Activated CD4-positive, alpha-beta T cell treated with anti-CD3 and anti-CD28 coated beads for 36 hours (primary cell): ENCODE measurements at regions of chr9 and their contacts with region 1.

Region 1: DNA sequence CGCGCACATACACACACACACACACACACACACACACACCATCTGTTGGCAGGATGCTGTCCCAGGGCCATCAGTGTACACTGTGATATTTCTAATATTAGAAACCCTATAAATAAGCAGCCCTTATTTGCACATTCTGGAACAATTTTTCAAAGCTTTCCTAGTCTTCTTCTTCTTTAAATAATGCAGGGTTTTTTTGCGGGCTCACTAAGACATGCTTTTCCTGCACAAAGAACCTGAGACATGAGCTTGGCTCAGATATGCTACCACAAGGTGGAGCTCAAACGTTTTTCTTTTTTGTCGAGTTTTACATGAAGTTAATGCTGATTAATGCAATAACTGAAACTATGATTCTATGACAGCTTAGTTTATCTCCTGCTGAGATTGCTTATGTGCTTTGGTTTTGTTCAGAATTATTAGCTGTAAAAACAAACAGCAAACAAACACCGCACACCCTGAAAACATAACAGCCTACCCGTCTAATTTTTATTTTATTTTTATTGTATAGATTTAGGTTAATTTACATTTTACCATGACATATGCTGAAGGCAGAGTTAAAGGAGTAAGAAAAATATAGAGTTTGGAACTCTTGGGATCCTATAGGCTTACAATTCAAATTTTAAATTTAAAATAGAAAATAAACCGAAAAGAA is 95.8 kb downstream of the ALDH1A1 start:
- DNase-seq: peak; percentile 9
- ATAC-seq: no peak
- H3K4me3 Mint-ChIP-seq: no peak overlapping the region
- H3K27ac Mint-ChIP-seq: no peak overlapping the region
- H3K4me1 Mint-ChIP-seq: no peaks in the 10 kb centered on the region
- H3K27me3 Mint-ChIP-seq: no peaks in the 10 kb centered on the region

Region 2: GRCh38 chr9:72794947-72795346 is 62.2 kb before region 1 on chr9:
- CTCF ChIA-PET with region 1: no interaction called
- POLR2A ChIA-PET with region 1: no interaction called
- intact Hi-C with region 1: loop called in 1 of 2 experiments (anchors 10 kb)
- DNase-seq: no peak
- ATAC-seq: no peak
- H3K4me3 Mint-ChIP-seq: no peak overlapping the region
- H3K27ac Mint-ChIP-seq: no peak overlapping the region
- H3K4me1 Mint-ChIP-seq: no peaks in the 10 kb centered on the region
- H3K27me3 Mint-ChIP-seq: peaks cover 8% of the 10 kb centered on the region

Region 3: DNA sequence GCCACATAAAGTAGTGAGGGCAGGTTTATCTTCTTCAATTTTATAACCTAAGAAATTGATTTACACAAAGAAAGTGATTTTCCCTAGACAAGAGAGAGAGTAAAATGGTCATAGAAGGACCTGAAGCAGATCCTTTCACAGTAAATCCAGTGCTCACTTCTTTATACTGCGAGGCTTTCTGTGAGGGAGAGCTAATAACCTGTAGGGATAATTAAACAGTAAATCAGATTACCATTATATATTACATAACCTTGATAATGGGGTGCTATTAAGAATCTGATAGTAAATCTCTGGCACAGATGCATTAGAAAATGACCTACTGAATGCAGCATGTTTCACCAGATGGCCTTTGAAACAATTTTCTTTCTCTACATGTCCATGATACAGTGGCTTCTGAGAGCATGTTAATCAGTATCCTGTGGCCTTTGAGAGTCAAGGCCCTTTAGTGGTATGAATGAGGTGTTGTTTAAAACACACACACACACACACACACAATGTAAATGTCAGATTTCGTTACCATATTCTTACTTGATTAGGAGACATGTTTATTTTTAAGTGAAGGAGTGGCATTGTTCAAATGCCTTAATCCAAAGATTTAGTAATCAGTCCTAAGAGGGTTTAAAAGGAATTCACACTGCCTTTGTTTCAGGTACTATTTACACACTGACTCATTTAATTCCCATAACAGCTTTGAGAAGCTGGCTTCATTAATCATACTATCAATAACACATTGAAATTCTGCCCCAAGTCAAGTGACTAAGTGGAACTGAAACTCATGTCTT is 29.0 kb before region 1 on chr9:
- CTCF ChIA-PET with region 1: no interaction called
- POLR2A ChIA-PET with region 1: no interaction called
- intact Hi-C with region 1: no loop called
- DNase-seq: no peak
- ATAC-seq: no peak
- H3K4me3 Mint-ChIP-seq: no peak overlapping the region
- H3K27ac Mint-ChIP-seq: no peak overlapping the region
- H3K4me1 Mint-ChIP-seq: no peaks in the 10 kb centered on the region
- H3K27me3 Mint-ChIP-seq: peaks cover 6% of the 10 kb centered on the region

Region 4: GRCh38 chr9:73023025-73023541 is 166.0 kb after region 1 on chr9:
- CTCF ChIA-PET with region 1: interaction called, 16 read pairs
- POLR2A ChIA-PET with region 1: no interaction called
- intact Hi-C with region 1: loop called (anchors 5 kb)
- DNase-seq: peak; percentile 72
- ATAC-seq: peak; percentile 74
- H3K4me3 Mint-ChIP-seq: no peak overlapping the region
- H3K27ac Mint-ChIP-seq: no peak overlapping the region
- H3K4me1 Mint-ChIP-seq: peaks cover 8% of the 10 kb centered on the region
- H3K27me3 Mint-ChIP-seq: peaks cover 11% of the 10 kb centered on the region

Region 5: DNA sequence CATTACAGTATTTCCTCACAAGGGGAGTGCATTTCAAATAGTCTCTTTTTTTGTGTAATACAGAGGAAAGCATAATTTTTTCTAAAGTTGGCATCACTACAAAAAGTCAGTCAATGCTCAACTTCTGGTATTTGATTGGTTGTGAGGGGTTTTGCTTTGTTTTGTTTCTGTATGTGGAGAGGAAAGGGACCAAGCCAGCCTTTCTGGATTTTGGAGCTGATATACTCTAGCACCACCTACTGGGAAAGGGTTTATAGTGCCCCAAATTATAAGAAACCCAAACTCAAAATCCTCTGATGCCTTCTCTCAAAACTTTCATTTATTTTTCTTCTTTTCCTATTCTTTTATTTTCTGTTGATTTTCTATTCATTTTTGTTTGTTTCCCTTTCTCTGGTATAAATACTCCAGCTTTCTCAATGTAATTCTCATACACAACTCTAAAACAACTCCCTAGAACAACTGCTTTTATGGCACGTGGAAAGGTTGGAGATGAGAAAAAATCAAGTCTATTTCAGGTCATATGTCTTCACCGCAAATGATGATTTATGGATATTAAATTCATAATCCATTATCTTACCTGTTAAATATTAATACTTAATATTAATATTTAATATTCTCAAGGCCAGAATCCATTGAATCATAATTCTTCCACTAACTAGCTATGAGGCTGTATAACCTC is 225.0 kb after region 1 on chr9:
- CTCF ChIA-PET with region 1: interaction called, 7 read pairs
- POLR2A ChIA-PET with region 1: no interaction called
- intact Hi-C with region 1: loop called (anchors 1 to 5 kb)
- DNase-seq: no peak
- ATAC-seq: no peak
- H3K4me3 Mint-ChIP-seq: no peak overlapping the region
- H3K27ac Mint-ChIP-seq: no peak overlapping the region
- H3K4me1 Mint-ChIP-seq: no peaks in the 10 kb centered on the region
- H3K27me3 Mint-ChIP-seq: peaks cover 3% of the 10 kb centered on the region